Endothelial cell of umbilical vein (primary cell): ENCODE measurements at regions of chr15 and their contacts with region 1.

Region 1: GRCh38 chr15:73633111-73633990 is at the start of gene NPTN:
- DNase-seq: peak; percentile 99
- H3K4me3 ChIP-seq: peak within 1 kb of the TSS; percentile 33 to 99 (median 67)
- H3K27ac ChIP-seq: peak within 1 kb of the TSS; percentile 89
- H3K4me1 ChIP-seq: peaks cover 31% of the 10 kb centered on the region
- H3K27me3 ChIP-seq: peaks cover 0 to 7% of the 10 kb centered on the region in 2 experiments
- CTCF ChIP-seq: no peak
- POLR2A ChIP-seq: peak; percentile 92
- total RNA-seq, gene NPTN: 71.5 and 77.4 TPM in 2 replicates

Region 2: DNA sequence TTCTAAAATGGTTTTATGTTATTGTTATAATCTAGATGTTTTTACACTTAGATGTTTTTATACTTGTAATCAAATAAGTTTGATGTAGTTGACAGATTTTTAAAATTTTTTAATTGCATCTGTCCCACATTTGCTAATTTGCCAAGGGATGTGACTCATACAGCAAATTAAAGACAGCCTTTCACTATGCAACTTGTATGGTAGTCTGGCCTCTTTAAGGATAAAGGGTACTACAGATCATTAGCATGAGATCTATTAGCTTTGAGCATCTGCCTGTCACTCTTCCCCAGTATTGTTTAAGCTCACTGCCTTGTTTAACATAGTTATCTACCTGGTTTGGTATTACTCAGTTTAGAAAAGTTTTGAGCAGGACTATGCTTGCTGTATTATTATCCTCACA is 83.2 kb before region 1 on chr15:
- CTCF ChIA-PET with region 1: interaction called, 14 read pairs
- POLR2A ChIA-PET with region 1: no interaction called
- dilution Hi-C with region 1: no loop called
- intact Hi-C with region 1: no loop called
- DNase-seq: no peak
- H3K4me3 ChIP-seq: no peak overlapping the region
- H3K27ac ChIP-seq: no peak overlapping the region
- H3K4me1 ChIP-seq: no peaks in the 10 kb centered on the region
- H3K27me3 ChIP-seq: no peaks in the 10 kb centered on the region
- CTCF ChIP-seq: no peak
- POLR2A ChIP-seq: no peak

Region 3: DNA sequence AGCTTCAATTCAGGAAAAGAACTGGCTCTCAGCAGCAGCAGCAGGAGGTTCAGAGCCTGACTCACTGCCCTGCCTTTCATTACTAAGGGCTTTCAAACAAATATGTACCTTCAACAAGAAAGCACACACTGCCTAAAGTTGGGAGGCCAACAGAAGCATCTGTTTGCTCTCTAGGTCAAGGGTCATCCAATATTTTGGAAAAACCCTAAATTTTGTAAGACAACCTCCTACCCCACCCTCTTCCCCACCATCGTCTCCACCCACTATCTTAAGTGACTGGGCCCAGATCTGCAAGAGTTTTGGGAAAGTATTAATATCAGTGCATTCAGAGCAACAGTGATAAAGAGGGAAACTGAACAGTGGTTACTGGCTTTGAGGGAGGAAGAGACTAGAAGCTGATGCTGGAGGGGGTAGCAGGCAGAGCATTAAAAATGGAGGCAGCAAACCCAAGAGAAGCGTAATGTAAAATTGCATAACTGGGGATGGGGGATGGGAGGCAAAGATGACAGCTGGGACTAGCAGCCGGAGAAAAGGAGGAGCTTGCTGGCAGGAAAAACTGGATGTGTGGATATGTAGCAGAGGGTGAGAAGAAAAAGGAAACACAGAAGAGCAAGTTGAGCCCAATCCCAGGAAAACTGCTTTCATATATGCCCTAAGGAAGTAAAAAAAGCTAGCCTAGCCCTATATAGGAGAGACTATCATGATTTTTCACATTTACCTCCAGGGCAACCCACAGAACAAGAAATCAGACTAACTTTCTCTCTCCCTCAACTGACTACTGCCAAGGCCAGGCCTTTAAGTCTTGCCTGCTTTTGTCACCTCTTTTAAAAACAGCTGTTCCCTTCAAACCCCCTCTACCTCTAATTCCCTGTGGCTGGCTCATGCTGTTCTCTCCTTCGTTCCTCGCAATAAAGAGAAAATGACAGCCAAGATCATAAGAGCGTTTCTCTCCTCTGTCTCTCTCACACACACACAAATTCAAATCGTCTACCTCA is 31.6 kb before region 1 on chr15:
- CTCF ChIA-PET with region 1: interaction called, 16 read pairs
- POLR2A ChIA-PET with region 1: no interaction called
- dilution Hi-C with region 1: no loop called
- intact Hi-C with region 1: loop called (anchors 1 kb)
- DNase-seq: peak; percentile 53
- H3K4me3 ChIP-seq: no peak overlapping the region
- H3K27ac ChIP-seq: peak overlapping the region; percentile 34
- H3K4me1 ChIP-seq: peaks cover 39% of the 10 kb centered on the region
- H3K27me3 ChIP-seq: no peaks in the 10 kb centered on the region
- CTCF ChIP-seq: no peak
- POLR2A ChIP-seq: no peak

Region 4: DNA sequence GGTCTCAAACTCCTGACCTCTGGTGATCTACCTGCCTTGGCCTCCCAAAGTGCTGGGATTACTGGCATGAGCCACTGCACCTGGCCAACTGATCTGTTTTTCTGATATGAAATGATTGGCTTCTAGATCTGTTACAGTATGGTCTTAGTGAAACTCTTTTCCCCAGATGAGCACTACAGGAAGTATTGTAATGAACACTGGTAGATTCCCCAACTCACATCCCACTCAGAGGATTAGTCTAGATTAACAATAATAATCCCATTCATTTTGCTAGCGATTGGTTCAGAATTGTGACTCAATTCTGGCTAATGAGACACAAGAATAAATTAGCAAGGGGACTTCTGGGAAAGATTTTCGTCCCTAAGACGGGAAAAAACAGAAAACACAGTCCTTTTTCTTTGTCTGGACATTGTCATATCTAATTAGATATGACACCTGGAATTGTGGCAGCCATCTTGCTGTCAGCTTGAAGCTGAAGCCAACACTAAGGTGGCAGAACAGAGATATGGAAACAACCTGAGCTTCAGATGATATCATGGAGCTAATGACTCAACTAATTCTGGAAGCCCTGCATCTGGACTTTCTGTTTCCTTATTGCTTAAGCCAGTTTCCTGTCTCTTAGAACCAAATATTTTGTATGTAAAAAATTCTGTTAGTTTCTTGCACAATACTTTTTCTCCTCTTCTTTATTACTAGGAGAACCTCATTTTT is 17.2 kb after region 1 on chr15:
- CTCF ChIA-PET with region 1: interaction called, 23 read pairs
- POLR2A ChIA-PET with region 1: no interaction called
- dilution Hi-C with region 1: no loop called
- intact Hi-C with region 1: no loop called
- DNase-seq: peak; percentile 39
- H3K4me3 ChIP-seq: no peak overlapping the region
- H3K27ac ChIP-seq: no peak overlapping the region
- H3K4me1 ChIP-seq: no peaks in the 10 kb centered on the region
- H3K27me3 ChIP-seq: peaks cover 2 to 5% of the 10 kb centered on the region in 2 experiments
- CTCF ChIP-seq: no peak
- POLR2A ChIP-seq: no peak

Region 5: GRCh38 chr15:73683777-73684580 is 50.6 kb after region 1 on chr15 and contains the start of gene CD276:
- CTCF ChIA-PET with region 1: interaction called, 105 read pairs
- POLR2A ChIA-PET with region 1: no interaction called
- dilution Hi-C with region 1: no loop called
- intact Hi-C with region 1: loop called (anchors 1 kb)
- DNase-seq: peak; percentile 55
- H3K4me3 ChIP-seq: peak within 1 kb of the TSS; percentile 73 to 82 (median 79)
- H3K27ac ChIP-seq: peak within 1 kb of the TSS; percentile 51
- H3K4me1 ChIP-seq: peaks cover 43% of the 10 kb centered on the region
- H3K27me3 ChIP-seq: no peaks in the 10 kb centered on the region
- CTCF ChIP-seq: no peak
- POLR2A ChIP-seq: no peak
- total RNA-seq, gene CD276: 85.6 and 85.7 TPM in 2 replicates

Region 6: DNA sequence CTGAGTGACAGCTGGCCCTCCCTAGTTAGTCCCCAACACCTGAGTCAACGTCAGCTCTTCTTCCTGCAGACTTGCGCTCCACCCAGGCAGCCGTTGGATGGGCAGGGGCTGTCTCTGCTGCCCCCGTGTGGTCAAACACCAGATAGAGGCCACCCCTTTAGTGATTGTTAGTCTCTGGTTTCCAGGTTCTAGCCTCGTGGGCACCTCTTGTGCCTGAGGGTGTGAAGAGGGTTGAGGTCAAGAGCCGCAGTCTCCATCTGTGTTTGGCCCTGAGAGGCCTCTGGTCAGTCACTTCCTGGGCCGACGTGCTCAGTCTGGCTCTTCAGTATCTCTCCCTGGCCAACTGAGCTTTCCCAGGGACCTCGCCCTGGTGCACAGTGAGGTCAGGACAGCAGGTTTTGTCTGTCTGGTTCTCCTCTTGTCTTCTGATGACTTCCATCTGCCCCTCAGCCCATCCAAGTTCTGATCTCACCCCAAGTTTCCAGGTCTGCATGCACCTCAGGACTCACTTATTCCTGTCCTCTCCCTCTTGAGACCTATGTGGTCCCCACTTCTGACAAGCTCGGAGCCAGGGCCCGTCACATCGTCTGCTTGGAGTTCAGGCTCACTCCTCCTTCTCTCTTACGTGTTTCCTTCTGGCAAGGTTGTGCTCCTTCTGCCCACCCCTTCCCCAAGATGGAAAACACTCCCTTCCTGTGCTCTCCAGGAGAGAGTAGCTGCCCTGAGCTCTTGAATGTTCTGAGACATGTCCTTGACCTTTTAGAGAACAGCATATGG is 71.7 kb after region 1 on chr15:
- CTCF ChIA-PET with region 1: interaction called, 207 read pairs
- POLR2A ChIA-PET with region 1: no interaction called
- dilution Hi-C with region 1: no loop called
- intact Hi-C with region 1: loop called (anchors 1 kb)
- DNase-seq: peak; percentile 52
- H3K4me3 ChIP-seq: no peak overlapping the region
- H3K27ac ChIP-seq: no peak overlapping the region
- H3K4me1 ChIP-seq: peaks cover 3% of the 10 kb centered on the region
- H3K27me3 ChIP-seq: no peaks in the 10 kb centered on the region
- CTCF ChIP-seq: peak; percentile 90 to 91
- POLR2A ChIP-seq: no peak

Region 7: GRCh38 chr15:75502360-75502759 is 1869.0 kb after region 1 on chr15:
- CTCF ChIA-PET with region 1: no interaction called
- POLR2A ChIA-PET with region 1: no interaction called
- dilution Hi-C with region 1: no loop called
- intact Hi-C with region 1: no loop called
- DNase-seq: no peak
- H3K4me3 ChIP-seq: no peak overlapping the region
- H3K27ac ChIP-seq: no peak overlapping the region
- H3K4me1 ChIP-seq: no peaks in the 10 kb centered on the region
- H3K27me3 ChIP-seq: no peaks in the 10 kb centered on the region
- CTCF ChIP-seq: no peak
- POLR2A ChIP-seq: no peak